ENCODE measurements at regions of chr2 and their contacts with region 1.

Region 1: DNA sequence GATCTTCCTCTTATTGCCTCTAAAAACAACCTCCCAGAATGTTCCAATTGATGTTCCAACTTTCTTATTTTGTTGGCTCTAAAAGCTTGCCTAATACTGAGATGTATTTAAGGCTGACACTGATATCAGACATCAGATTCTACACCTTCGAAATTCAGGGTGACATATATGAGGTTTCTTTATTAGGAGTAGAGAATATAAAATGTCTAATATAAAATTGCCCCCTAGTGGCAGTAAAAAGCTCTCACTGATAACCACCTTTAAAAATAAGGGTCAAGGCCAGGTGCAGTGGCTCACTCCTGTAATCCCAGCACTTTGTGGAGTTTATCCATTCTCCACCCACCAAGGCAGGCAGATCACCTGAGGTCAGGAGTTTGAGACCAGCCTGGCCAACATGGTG is 789.7 kb upstream of the SLC39A10 start:
- DNase-seq: no peak
- H3K4me3 ChIP-seq: no peak overlapping the region
- H3K27ac ChIP-seq: no peak overlapping the region
- H3K4me1 ChIP-seq: no peaks in the 10 kb centered on the region
- H3K27me3 ChIP-seq: no peaks in the 10 kb centered on the region
- CTCF ChIP-seq: peak; percentile 12 to 20 (median 18)
- POLR2A ChIP-seq: no peak

Region 2: GRCh38 chr2:192948316-192948715 is 1919.0 kb before region 1 on chr2:
- intact Hi-C with region 1: no loop called
- DNase-seq: no peak
- H3K4me3 ChIP-seq: no peak overlapping the region
- H3K27ac ChIP-seq: no peak overlapping the region
- H3K4me1 ChIP-seq: no peaks in the 10 kb centered on the region
- H3K27me3 ChIP-seq: no peaks in the 10 kb centered on the region
- CTCF ChIP-seq: no peak
- POLR2A ChIP-seq: no peak

Region 3: GRCh38 chr2:194135463-194135862 is 731.9 kb before region 1 on chr2:
- intact Hi-C with region 1: no loop called
- DNase-seq: no peak
- H3K4me3 ChIP-seq: no peak overlapping the region
- H3K27ac ChIP-seq: no peak overlapping the region
- H3K4me1 ChIP-seq: no peaks in the 10 kb centered on the region
- H3K27me3 ChIP-seq: no peaks in the 10 kb centered on the region
- CTCF ChIP-seq: no peak
- POLR2A ChIP-seq: no peak

Region 4: GRCh38 chr2:195414537-195415095 is 547.3 kb after region 1 on chr2:
- intact Hi-C with region 1: loop called (anchors 5 kb)
- DNase-seq: no peak
- H3K4me3 ChIP-seq: no peak overlapping the region
- H3K27ac ChIP-seq: no peak overlapping the region
- H3K4me1 ChIP-seq: no peaks in the 10 kb centered on the region
- H3K27me3 ChIP-seq: no peaks in the 10 kb centered on the region
- CTCF ChIP-seq: no peak
- POLR2A ChIP-seq: no peak

Measured in breast epithelium (tissue), 4 donors.